Left ventricle myocardium inferior (tissue), 1 donor: ENCODE measurements at regions of chr13 and their contacts with region 1.

Region 1: GRCh38 chr13:45482571-45483173 is 17.9 kb downstream of the COG3 start:
- DNase-seq: no peak
- H3K4me3 ChIP-seq: no peak overlapping the region
- H3K27ac ChIP-seq: peak overlapping the region; percentile 41
- H3K4me1 ChIP-seq: peaks cover 33% of the 10 kb centered on the region
- H3K27me3 ChIP-seq: no peaks in the 10 kb centered on the region
- CTCF ChIP-seq: no peak

Region 2: DNA sequence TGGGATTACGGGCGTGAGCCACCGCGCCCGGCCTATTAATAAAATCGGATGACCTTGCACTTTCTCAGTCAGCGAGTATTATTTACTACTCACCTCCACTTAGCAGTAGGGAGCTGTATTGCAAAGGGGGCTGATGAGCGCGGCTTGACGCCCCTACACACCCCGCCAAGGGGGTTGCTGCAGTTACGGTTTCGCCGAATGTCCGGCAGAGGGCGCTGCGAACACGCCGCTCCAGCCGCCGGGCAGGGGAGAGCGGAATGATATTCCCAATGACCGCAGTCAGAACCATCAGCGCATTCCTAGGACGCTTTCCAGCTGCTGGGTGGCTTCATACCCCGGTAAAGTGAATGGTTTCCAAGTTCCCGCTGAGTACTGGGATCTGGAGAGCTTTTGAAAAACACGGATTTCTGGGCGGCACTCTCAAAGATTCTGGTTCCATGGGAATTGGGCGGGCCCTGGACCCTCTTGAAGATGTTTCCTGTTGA is 111.7 kb before region 1 on chr13:
- intact Hi-C with region 1: loop called (anchors 10 kb)
- DNase-seq: peak; percentile 77
- H3K4me3 ChIP-seq: peak overlapping the region; percentile 52
- H3K27ac ChIP-seq: peak overlapping the region; percentile 45
- H3K4me1 ChIP-seq: peaks cover 50% of the 10 kb centered on the region
- H3K27me3 ChIP-seq: no peaks in the 10 kb centered on the region
- CTCF ChIP-seq: peak; percentile 97

Region 3: DNA sequence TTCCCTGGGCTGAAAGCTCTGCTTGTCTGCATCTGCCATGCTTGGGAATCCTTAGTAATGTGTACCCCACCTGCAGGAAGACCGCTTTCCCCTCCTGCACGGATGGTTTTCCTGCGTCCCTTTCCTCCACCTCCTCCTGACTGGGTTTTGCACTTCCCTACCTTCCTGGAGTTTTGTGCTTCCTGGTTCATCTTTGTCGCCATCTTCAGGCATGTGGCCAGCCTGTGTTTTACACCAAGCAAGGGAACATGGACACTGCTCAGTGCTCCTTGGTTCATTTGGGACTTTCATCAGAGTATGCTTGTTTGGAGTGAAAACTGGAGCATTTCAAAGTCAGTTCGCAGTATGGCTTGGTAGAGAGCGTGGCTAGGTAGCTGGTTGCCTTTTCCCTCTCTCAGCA is 102.1 kb after region 1 on chr13:
- intact Hi-C with region 1: no loop called
- DNase-seq: no peak
- H3K4me3 ChIP-seq: no peak overlapping the region
- H3K27ac ChIP-seq: no peak overlapping the region
- H3K4me1 ChIP-seq: no peaks in the 10 kb centered on the region
- H3K27me3 ChIP-seq: peaks cover 48% of the 10 kb centered on the region
- CTCF ChIP-seq: no peak